PC-9 (cell line): ENCODE measurements at regions of chr7 and their contacts with region 1.

Region 1: GRCh38 chr7:139570119-139570518 is 46.6 kb downstream of the CLEC2L start:
- DNase-seq: no peak
- H3K4me3 ChIP-seq: no peak overlapping the region
- H3K27ac ChIP-seq: no peak overlapping the region
- H3K4me1 ChIP-seq: no peaks in the 10 kb centered on the region
- H3K27me3 ChIP-seq: no peaks in the 10 kb centered on the region
- CTCF ChIP-seq: peak; percentile 35; the same call in 1 of the 2 replicates

Region 2: GRCh38 chr7:139502226-139502625 is 67.9 kb before region 1 on chr7:
- CTCF ChIA-PET with region 1: no interaction called
- POLR2A ChIA-PET with region 1: no interaction called
- intact Hi-C with region 1: loop called (anchors 5 kb)
- DNase-seq: no peak
- H3K4me3 ChIP-seq: no peak overlapping the region
- H3K27ac ChIP-seq: no peak overlapping the region
- H3K4me1 ChIP-seq: no peaks in the 10 kb centered on the region
- H3K27me3 ChIP-seq: no peaks in the 10 kb centered on the region
- CTCF ChIP-seq: no peak

Region 3: GRCh38 chr7:139627831-139628230 is 57.7 kb after region 1 on chr7:
- CTCF ChIA-PET with region 1: interaction called, 5 read pairs
- POLR2A ChIA-PET with region 1: interaction called, 10 read pairs
- intact Hi-C with region 1: no loop called
- DNase-seq: no peak
- H3K4me3 ChIP-seq: no peak overlapping the region
- H3K27ac ChIP-seq: no peak overlapping the region
- H3K4me1 ChIP-seq: no peaks in the 10 kb centered on the region
- H3K27me3 ChIP-seq: no peaks in the 10 kb centered on the region
- CTCF ChIP-seq: no peak